ENCODE measurements at regions of chr12 and their contacts with region 1.

Region 1: GRCh38 chr12:119444456-119445044 is 110.0 kb downstream of the CCDC60 start:
- DNase-seq: peak; percentile 62
- H3K4me3 ChIP-seq: peak overlapping the region in 1 of 2 experiments; percentile 36; a peak in 1 of 4 replicates
- H3K27ac ChIP-seq: no peak overlapping the region; a peak in 1 of 4 replicates
- H3K4me1 ChIP-seq: no peaks in the 10 kb centered on the region; a peak in 1 of 4 replicates
- H3K27me3 ChIP-seq: no peaks in the 10 kb centered on the region
- CTCF ChIP-seq: peak; percentile 88
- EP300 ChIP-seq: no peak
- RAD21 ChIP-seq: peak; percentile 70

Region 2: GRCh38 chr12:119423285-119423684 is 21.3 kb before region 1 on chr12:
- CTCF ChIA-PET with region 1: interaction called, 13 read pairs
- POLR2A ChIA-PET with region 1: no interaction called
- DNase-seq: peak; percentile 30
- H3K4me3 ChIP-seq: no peak overlapping the region
- H3K27ac ChIP-seq: no peak overlapping the region
- H3K4me1 ChIP-seq: no peaks in the 10 kb centered on the region
- H3K27me3 ChIP-seq: no peaks in the 10 kb centered on the region
- CTCF ChIP-seq: no peak
- EP300 ChIP-seq: no peak
- RAD21 ChIP-seq: no peak

Region 3: DNA sequence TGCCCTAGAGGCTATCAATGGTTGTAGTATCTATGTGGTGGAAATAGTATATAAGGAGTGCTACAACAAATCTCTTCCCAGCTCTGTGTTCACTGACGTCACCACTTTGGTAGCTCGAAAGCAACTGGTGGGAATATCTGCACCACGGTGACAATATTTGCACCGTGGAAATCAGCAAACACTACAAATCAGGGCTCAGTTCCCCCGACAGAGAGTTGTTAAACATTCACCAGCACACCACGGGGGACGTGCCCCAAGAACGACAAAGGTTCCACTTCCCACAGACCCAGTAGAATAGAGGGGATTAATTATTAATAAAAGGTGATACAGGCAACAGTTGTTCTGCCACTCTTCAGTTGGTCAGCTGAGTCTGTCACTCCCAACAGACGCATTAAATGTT is 11.6 kb before region 1 on chr12:
- CTCF ChIA-PET with region 1: interaction called, 47 read pairs
- POLR2A ChIA-PET with region 1: no interaction called
- DNase-seq: no peak
- H3K4me3 ChIP-seq: no peak overlapping the region
- H3K27ac ChIP-seq: no peak overlapping the region
- H3K4me1 ChIP-seq: no peaks in the 10 kb centered on the region
- H3K27me3 ChIP-seq: no peaks in the 10 kb centered on the region
- CTCF ChIP-seq: no peak
- EP300 ChIP-seq: no peak
- RAD21 ChIP-seq: no peak

Region 4: GRCh38 chr12:119500209-119500608 is 55.7 kb after region 1 on chr12:
- CTCF ChIA-PET with region 1: interaction called, 11 read pairs
- POLR2A ChIA-PET with region 1: no interaction called
- DNase-seq: no peak
- H3K4me3 ChIP-seq: no peak overlapping the region
- H3K27ac ChIP-seq: no peak overlapping the region
- H3K4me1 ChIP-seq: no peaks in the 10 kb centered on the region
- H3K27me3 ChIP-seq: no peaks in the 10 kb centered on the region
- CTCF ChIP-seq: peak; percentile 20; the same call in 1 of the 2 replicates
- EP300 ChIP-seq: no peak
- RAD21 ChIP-seq: peak; percentile 20; the same call in 1 of the 2 replicates

Region 5: DNA sequence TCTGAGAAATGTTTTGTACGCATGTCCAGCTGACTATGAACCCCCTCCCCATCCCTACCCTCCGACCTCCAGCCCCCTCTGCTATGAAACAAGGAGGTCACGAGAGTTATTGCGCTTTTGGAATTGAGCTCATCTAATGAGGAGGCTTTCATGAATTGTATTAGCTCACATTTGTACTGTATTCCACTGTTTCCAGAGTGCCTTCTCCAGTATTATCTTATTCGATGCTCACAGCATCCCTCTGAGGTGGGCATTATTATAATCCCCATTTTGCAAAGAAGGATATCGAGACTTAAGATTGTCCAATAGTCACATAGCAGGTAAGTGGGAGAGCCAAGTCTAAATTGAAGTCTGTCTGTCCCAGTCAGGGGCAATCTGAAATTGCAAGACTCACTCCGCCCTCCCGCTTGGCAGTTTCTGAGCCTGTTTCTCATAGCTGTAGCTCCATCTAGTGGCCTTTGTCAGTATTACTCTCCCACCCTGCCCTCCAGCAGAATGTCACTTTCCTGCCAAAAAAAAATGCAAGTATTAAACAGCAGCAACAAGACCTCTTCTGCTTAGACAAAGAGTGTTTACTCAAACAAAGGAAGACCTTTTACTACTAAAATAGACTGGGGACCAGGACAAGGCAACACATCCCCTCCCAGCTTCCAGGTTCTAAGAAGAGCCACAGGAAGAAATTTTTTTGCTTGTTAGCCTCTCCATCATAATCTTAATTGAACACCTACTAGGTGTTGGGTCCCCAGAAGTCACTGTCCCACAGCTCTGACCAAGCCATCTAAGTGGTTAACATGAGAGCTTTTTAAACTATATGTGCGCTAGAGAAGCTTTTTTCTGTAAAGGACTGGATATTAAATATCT is 100.4 kb after region 1 on chr12:
- CTCF ChIA-PET with region 1: interaction called, 138 read pairs
- POLR2A ChIA-PET with region 1: no interaction called
- DNase-seq: peak; percentile 75
- H3K4me3 ChIP-seq: 0 out of 4 replicates have a peak overlapping the region, but pooled peaks of 1 of the 2 experiments have one; percentile 1
- H3K27ac ChIP-seq: no peak overlapping the region
- H3K4me1 ChIP-seq: no peaks in the 10 kb centered on the region
- H3K27me3 ChIP-seq: no peaks in the 10 kb centered on the region
- CTCF ChIP-seq: peak; percentile 86
- EP300 ChIP-seq: no peak
- RAD21 ChIP-seq: peak; percentile 94

Region 6: GRCh38 chr12:119578112-119578511 is 133.6 kb after region 1 on chr12:
- CTCF ChIA-PET with region 1: no interaction called
- POLR2A ChIA-PET with region 1: no interaction called
- DNase-seq: no peak
- H3K4me3 ChIP-seq: no peak overlapping the region
- H3K27ac ChIP-seq: peak overlapping the region in 1 of 2 experiments; percentile 16; a peak in 1 of 4 replicates
- H3K4me1 ChIP-seq: no peaks in the 10 kb centered on the region; a peak in 1 of 4 replicates
- H3K27me3 ChIP-seq: no peaks in the 10 kb centered on the region
- CTCF ChIP-seq: no peak
- EP300 ChIP-seq: peak in 1 of 2 experiments; percentile 62; a peak in 1 of 4 replicates
- RAD21 ChIP-seq: no peak

Measured in SK-N-SH (cell line).